ENCODE measurements at regions of chr1 and their contacts with region 1.

Region 1: GRCh38 chr1:153977250-153978240 is at the start of gene JTB:
- DNase-seq: peak; percentile 82
- H3K4me3 ChIP-seq: peak within 1 kb of the TSS; percentile 50 to 91 (median 70)
- H3K27ac ChIP-seq: peak within 1 kb of the TSS; percentile 4
- H3K4me1 ChIP-seq: peaks cover 10% of the 10 kb centered on the region
- H3K27me3 ChIP-seq: no peaks in the 10 kb centered on the region
- CTCF ChIP-seq: no peak
- POLR2A ChIP-seq: peak; percentile 94
- total RNA-seq, gene JTB: 89.0 and 90.2 TPM in 2 replicates

Region 2: DNA sequence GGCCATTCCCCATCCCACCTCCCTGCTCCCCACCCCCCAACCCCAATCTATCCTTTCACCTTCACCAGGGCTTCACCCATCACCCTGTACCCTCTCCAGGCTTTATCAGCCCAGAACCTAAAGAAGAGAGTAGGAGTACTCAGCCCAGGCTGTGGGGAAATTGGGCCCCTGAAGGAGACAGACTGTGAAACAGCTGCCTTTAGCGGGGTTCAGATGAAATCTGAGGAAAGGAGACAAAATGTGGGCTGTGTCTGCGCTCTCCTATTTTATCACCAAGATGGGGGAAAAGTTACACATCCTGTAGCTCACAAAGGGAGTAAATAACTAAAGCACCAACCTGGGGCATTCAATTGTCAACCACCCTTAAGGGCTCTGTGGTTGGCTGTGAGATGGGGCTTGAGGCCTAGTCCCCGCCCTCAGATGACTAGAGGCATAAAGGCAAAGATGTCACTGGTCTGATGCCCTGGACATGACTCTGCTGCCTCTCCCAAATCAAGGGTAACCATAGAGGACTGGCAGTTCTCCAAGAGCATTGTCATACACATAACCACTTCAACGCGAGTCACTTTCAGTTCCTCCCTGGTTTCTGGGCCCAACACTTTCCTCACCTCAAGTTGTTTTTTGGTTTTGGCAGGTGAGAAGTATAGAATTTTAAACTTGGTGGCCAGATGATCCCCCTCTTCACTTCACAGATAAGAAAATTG is 172.4 kb before region 1 on chr1:
- CTCF ChIA-PET with region 1: no interaction called
- POLR2A ChIA-PET with region 1: no interaction called
- dilution Hi-C with region 1: no loop called
- intact Hi-C with region 1: no loop called
- DNase-seq: peak; percentile 19
- H3K4me3 ChIP-seq: no peak overlapping the region
- H3K27ac ChIP-seq: no peak overlapping the region
- H3K4me1 ChIP-seq: peaks cover 4% of the 10 kb centered on the region
- H3K27me3 ChIP-seq: no peaks in the 10 kb centered on the region
- CTCF ChIP-seq: no peak
- POLR2A ChIP-seq: no peak

Region 3: DNA sequence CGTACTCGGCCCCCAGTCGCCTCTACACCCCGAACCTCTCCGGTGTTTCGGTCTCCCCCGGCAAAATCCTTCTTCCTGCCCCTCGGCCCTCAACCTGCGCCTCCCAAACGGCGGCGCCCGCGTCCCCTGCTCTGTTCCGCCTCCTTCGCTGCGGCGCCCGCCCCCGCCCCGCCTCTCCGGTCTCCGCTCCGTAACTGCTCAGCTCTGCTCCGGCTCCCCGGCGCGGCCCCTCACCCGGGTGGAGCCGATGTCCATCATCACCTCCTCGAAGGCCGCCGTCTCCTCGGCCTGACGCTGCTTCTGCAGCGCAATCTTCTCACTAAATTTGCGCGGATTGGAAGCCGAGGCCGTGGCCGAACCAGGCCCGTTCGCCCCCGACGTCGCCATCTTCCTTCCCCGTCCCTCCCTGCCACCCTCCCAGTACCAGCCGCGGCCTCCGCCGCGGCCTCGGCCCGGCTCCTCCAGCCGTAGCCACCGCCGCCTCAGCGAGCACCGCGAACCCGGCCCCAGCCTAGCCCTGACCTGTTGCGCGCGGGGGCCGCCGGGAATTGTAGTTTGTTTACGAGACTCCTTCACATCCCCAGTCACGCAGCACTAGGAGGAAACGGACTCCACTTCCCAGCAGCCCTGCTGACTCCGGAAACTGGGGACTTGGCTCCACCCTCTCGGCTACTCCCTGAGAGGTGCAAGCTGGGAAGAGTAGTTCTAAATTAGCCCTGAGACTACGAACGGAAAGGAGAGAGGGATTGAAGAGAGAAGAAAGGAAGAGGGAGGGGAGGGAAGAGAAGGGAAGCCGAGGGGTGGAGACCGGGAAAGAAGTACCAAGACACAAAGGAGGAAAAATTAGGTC is 19.2 kb before region 1 on chr1 and contains the start of gene CRTC2:
- CTCF ChIA-PET with region 1: interaction called, 21 read pairs
- POLR2A ChIA-PET with region 1: interaction called, 5 read pairs
- dilution Hi-C with region 1: no loop called
- intact Hi-C with region 1: loop called (anchors 1 kb)
- DNase-seq: peak; percentile 98
- H3K4me3 ChIP-seq: peak within 1 kb of the TSS; percentile 47 to 80 (median 75)
- H3K27ac ChIP-seq: peak within 1 kb of the TSS; percentile 18
- H3K4me1 ChIP-seq: peaks cover 35% of the 10 kb centered on the region
- H3K27me3 ChIP-seq: no peaks in the 10 kb centered on the region
- CTCF ChIP-seq: no peak
- POLR2A ChIP-seq: peak; percentile 33
- total RNA-seq, gene CRTC2: 39.0 and 42.2 TPM in 2 replicates

Measured in endothelial cell of umbilical vein (primary cell).